ENCODE measurements at regions of chr3 and their contacts with region 1.

Region 1: DNA sequence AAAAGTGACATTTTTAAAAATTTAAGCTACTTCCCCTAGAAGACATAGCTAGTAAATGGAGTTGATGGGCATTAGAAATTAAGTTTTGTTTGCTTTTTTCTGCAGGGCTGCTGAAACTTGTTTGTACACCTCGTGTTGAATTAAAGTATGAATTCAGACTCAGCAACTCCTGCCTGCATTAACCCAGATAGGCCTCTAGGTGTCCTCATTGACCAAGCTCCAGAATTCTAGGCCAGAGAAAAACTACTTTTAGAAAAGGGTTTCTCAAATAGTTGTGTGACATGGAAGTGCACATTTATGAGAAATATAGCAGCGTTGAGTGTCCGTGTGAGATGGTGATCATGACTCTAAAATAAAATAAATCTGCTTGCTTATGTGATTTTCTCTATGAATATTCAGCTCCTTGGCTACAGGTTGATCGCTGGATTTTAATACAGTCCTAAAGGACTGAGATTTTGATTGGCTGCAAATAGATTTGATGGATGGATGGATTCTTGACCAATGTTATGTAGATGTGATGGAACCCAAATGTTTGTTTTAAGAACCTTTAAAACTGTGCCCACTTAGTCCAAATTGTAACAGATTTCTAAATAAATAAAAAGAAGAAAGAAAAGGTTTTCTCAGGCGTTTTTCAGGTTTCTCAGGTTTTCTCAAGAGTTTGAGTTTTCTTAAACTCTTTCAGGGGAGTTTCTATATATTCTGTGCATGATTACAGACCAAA is 39.4 kb upstream of the LMOD3 start:
- DNase-seq: peak; percentile 7
- H3K4me3 ChIP-seq: no peak overlapping the region
- H3K27ac ChIP-seq: no peak overlapping the region
- H3K27me3 ChIP-seq: peaks cover 11% of the 10 kb centered on the region
- CTCF ChIP-seq: peak; percentile 98

Region 2: GRCh38 chr3:69120879-69121464 is 40.8 kb before region 1 on chr3:
- CTCF ChIA-PET with region 1: interaction called, 29 read pairs
- POLR2A ChIA-PET with region 1: no interaction called
- DNase-seq: peak; percentile 27
- H3K4me3 ChIP-seq: no peak overlapping the region
- H3K27ac ChIP-seq: no peak overlapping the region
- H3K27me3 ChIP-seq: peaks cover 2% of the 10 kb centered on the region
- CTCF ChIP-seq: peak; percentile 99

Region 3: GRCh38 chr3:69181592-69182211 is 20.0 kb after region 1 on chr3:
- CTCF ChIA-PET with region 1: interaction called, 65 read pairs
- POLR2A ChIA-PET with region 1: no interaction called
- DNase-seq: no peak
- H3K4me3 ChIP-seq: no peak overlapping the region
- H3K27ac ChIP-seq: peak overlapping the region; percentile 31
- H3K27me3 ChIP-seq: no peaks in the 10 kb centered on the region
- CTCF ChIP-seq: no peak

Region 4: DNA sequence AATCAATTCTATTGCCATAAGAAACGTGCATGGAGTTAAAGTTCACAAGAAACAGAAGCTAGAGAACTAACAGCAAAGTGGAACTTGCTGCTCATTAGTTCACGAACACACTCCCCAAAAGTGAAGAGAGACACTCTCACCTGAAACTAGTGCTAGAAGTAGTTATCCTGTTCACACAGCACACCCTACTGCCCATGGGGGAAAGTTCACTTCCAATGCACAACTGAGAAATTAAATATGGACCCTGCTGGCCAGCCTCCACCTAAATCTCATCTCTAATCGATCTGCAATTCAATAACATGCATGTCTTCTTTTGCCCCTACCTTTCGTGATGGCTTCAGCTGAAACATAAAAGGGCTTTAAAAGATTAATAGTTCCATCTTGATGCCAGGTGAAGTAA is 263.5 kb after region 1 on chr3:
- CTCF ChIA-PET with region 1: interaction called, 34 read pairs
- POLR2A ChIA-PET with region 1: no interaction called
- DNase-seq: no peak
- H3K4me3 ChIP-seq: no peak overlapping the region
- H3K27ac ChIP-seq: no peak overlapping the region
- H3K27me3 ChIP-seq: no peaks in the 10 kb centered on the region
- CTCF ChIP-seq: peak; percentile 46

Region 5: GRCh38 chr3:69671082-69671952 is 509.6 kb after region 1 on chr3:
- CTCF ChIA-PET with region 1: interaction called, 39 read pairs
- POLR2A ChIA-PET with region 1: no interaction called
- DNase-seq: no peak
- H3K4me3 ChIP-seq: no peak overlapping the region
- H3K27ac ChIP-seq: no peak overlapping the region
- H3K27me3 ChIP-seq: peaks cover 10% of the 10 kb centered on the region
- CTCF ChIP-seq: peak; percentile 76